ENCODE measurements at regions of chr2 and their contacts with region 1.

Region 1: DNA sequence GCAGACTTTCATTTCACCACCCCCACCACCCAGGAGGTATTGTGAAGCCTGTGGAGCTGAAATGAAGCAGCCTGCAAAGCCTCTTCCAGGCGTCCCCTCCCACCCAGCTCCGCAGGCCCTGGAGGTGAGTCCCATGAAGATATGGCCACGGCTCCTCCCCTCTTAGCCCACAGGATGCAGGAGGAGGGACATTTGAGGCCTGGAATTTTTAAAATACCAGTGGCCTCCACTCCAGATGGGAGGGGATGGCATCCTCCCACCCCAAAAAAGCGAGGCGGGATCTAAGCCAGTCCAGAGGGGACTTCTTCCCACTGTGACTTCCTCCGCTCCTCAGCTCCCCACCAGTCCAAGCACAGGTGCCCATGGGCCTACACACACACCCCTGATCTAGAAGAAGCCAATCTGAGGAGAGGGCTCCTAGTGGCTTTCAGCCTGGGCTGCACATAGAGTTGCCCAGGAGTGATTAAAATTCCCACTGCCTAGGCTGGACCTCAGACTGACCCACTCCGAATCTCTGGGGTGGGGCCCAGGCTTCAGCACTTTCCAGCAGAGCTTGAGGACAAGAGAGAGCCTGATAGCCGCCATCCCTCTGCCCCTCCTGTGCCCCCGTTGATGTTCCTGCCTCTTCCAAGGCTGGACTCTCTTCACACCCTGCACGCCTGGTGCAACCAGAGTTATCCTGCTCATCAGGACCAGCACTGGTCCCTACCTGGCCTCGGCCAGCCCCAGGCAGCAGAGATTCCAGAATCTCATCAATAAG is 206.9 kb downstream of the TNS1 start:
- DNase-seq: peak in 1 of 5 donors; percentile 49
- ATAC-seq: peak in 1 of 4 donors; percentile 3
- H3K4me3 ChIP-seq: no peak overlapping the region
- H3K27ac ChIP-seq: peak overlapping the region in 1 of 12 donors; percentile 77
- H3K4me1 ChIP-seq: peaks cover 0 to 77% (median 42%) of the 10 kb centered on the region in 12 donors
- H3K27me3 ChIP-seq: no peaks in the 10 kb centered on the region
- CTCF ChIP-seq: no peak
- POLR2A ChIP-seq: no peak

Region 2: GRCh38 chr2:217643789-217644301 is 152.0 kb before region 1 on chr2:
- intact Hi-C with region 1: no loop called
- DNase-seq: no peak
- ATAC-seq: peak; percentile 60 to 75 (median 64)
- H3K4me3 ChIP-seq: no peak overlapping the region
- H3K27ac ChIP-seq: peak overlapping the region in 5 of 12 donors; percentile 16 to 64 (median 40)
- H3K4me1 ChIP-seq: peaks cover 0 to 20% (median 6%) of the 10 kb centered on the region in 12 donors
- H3K27me3 ChIP-seq: no peaks in the 10 kb centered on the region
- CTCF ChIP-seq: no peak
- POLR2A ChIP-seq: no peak

Region 3: DNA sequence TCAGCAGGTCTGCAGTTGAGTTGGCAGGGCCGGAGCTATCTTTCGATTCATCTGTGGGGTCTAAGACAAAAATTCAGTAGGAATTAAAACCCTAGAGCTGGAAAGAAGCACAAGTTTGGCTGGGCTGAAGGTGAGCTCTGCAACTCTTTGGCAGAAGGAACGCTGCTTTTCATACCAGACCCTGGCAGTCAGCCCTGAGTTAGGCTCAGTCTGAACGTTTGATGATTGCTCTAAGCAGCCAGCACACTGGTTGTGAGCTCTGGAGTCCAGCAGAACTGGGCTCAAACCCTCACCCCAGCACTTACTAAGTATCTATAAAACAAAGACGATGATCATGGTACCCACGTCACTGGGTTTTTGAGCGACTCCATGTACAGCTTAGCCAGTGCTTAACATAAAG is 14.4 kb after region 1 on chr2:
- intact Hi-C with region 1: loop called in 1 of 10 experiments (anchors 1 kb)
- DNase-seq: peak in 1 of 5 donors; percentile 34
- ATAC-seq: peak in 3 of 4 donors; percentile 19 to 55 (median 25)
- H3K4me3 ChIP-seq: no peak overlapping the region
- H3K27ac ChIP-seq: no peak overlapping the region
- H3K4me1 ChIP-seq: peaks cover 3 to 88% (median 56%) of the 10 kb centered on the region in 12 donors
- H3K27me3 ChIP-seq: no peaks in the 10 kb centered on the region
- CTCF ChIP-seq: no peak
- POLR2A ChIP-seq: no peak

Region 4: DNA sequence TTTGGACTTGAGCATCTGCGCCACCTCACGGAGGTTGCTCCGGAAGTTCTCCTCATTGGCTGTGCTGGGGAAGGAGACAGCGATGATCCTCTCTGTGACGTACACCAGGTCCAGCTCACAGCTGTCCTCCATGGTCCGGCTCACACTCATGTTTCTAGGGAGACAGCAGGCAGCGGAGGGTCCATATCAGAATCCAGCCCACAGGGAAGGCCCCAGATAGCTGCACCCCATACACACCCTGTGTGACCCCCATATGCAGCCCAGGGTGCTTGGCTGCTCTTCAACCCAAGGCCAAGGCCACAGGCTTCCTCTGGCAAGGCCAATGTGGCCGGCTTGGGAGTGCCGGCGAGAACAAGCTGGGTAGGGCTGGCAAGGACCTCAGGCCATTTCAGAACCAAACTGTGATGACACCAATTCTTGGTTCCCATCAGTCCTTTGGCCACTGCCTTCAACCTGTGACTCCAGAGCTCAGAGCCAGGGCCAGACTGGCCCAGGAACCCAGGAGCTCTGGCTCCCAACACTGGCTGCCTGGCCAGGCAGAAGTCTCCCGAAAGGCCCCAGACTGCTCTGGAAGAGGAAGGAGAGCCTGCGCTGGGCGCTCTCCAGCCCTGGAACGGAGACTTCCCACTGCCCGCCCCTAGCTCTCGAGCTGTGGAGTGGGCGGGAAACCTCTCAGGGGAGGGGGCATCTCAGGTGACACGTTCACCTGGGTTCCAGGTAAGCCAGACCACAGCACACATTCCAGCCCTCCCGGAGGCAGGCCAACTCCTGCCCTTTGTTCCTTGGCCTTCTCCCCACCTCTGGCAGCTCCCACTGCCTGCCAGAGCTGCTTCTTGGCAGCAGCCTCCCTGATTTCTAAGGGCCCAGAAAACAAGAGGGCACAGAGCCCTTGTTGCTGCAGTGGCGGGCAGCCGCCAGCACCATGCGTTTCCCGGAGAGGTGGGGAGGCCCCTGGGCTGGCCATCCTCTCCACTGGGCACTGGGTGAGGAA is 102.2 kb after region 1 on chr2:
- intact Hi-C with region 1: no loop called
- DNase-seq: peak in 4 of 5 donors; percentile 60 to 82 (median 70)
- ATAC-seq: peak; percentile 42 to 55 (median 48)
- H3K4me3 ChIP-seq: no peak overlapping the region
- H3K27ac ChIP-seq: peak overlapping the region; percentile 43 to 99 (median 94)
- H3K4me1 ChIP-seq: peaks cover 21 to 78% (median 63%) of the 10 kb centered on the region in 12 donors
- H3K27me3 ChIP-seq: no peaks in the 10 kb centered on the region
- CTCF ChIP-seq: no peak
- POLR2A ChIP-seq: no peak

Measured in heart left ventricle (tissue), 16 donors.